Endothelial cell of umbilical vein (primary cell): ENCODE measurements at regions of chr6 and their contacts with region 1.

Region 1: DNA sequence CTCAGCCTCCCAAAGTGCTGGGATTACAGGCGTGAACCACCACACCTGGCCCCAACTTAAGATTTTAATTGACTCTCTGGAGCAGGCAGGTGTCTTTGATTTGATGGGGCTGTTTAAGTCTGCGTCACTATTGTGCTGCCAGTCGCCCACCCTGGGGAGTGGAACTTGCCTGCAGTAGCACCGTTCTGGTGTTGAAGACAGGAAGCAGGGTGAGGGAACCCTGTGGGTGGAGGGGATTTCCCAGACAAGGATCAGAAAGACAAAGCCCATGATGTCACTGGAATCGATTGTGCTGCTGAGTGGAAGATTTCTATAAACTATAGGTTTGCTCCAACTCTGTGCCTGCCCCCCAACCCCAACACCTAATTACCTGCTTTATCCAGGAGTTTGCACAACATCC is 11.0 kb downstream of the ALDH8A1 start:
- DNase-seq: no peak
- H3K4me3 ChIP-seq: no peak overlapping the region
- H3K27ac ChIP-seq: no peak overlapping the region
- H3K4me1 ChIP-seq: no peaks in the 10 kb centered on the region
- H3K27me3 ChIP-seq: no peaks in the 10 kb centered on the region
- CTCF ChIP-seq: no peak
- POLR2A ChIP-seq: no peak

Region 2: DNA sequence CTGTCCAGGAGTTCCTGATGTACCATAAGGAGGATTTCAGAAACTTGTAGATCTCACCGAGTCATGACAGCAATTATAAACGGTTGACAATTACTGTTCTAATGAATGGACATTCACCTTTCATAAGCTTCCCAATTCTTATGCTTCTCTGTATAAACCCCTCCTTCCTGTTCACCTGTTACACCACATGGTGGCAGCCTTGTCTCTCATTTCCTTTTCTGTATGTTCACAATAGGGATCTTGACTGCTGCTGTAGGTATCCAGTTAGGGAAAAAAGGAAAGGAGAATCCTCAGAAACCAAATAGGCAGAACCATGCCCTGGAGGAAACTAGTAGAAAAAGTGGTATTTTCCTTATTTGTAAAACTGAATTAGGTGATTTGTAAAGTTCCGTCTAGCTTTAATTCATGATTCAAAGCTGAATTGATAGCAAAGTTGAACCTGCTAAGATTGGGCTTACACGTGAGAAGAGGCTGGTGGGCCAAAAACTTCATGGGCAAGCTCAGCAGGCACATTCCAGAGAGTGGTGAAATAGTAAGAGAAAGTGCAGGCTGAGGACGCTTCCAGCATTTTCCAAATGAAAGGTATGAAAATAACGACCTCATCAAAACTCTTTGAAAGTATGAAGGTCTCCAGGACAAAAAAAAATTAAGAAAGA is 1014.8 kb before region 1 on chr6:
- CTCF ChIA-PET with region 1: interaction called, 21 read pairs
- POLR2A ChIA-PET with region 1: no interaction called
- dilution Hi-C with region 1: no loop called
- intact Hi-C with region 1: no loop called
- DNase-seq: peak; percentile 82
- H3K4me3 ChIP-seq: no peak overlapping the region
- H3K27ac ChIP-seq: no peak overlapping the region
- H3K4me1 ChIP-seq: no peaks in the 10 kb centered on the region
- H3K27me3 ChIP-seq: peaks cover 13 to 31% of the 10 kb centered on the region in 2 experiments
- CTCF ChIP-seq: peak; percentile 59 to 60
- POLR2A ChIP-seq: no peak

Region 3: GRCh38 chr6:134123666-134124208 is 815.2 kb before region 1 on chr6:
- CTCF ChIA-PET with region 1: interaction called, 258 read pairs
- POLR2A ChIA-PET with region 1: no interaction called
- dilution Hi-C with region 1: no loop called
- intact Hi-C with region 1: loop called (anchors 1 kb)
- DNase-seq: peak; percentile 76
- H3K4me3 ChIP-seq: no peak overlapping the region
- H3K27ac ChIP-seq: no peak overlapping the region
- H3K4me1 ChIP-seq: no peaks in the 10 kb centered on the region
- H3K27me3 ChIP-seq: no peaks in the 10 kb centered on the region
- CTCF ChIP-seq: peak; percentile 38 to 42
- POLR2A ChIP-seq: no peak

Region 4: GRCh38 chr6:134161036-134161435 is 777.9 kb before region 1 on chr6:
- CTCF ChIA-PET with region 1: interaction called, 111 read pairs
- POLR2A ChIA-PET with region 1: no interaction called
- dilution Hi-C with region 1: no loop called
- intact Hi-C with region 1: loop called (anchors 1 kb)
- DNase-seq: no peak
- H3K4me3 ChIP-seq: no peak overlapping the region
- H3K27ac ChIP-seq: no peak overlapping the region
- H3K4me1 ChIP-seq: no peaks in the 10 kb centered on the region
- H3K27me3 ChIP-seq: no peaks in the 10 kb centered on the region
- CTCF ChIP-seq: no peak
- POLR2A ChIP-seq: no peak

Region 5: DNA sequence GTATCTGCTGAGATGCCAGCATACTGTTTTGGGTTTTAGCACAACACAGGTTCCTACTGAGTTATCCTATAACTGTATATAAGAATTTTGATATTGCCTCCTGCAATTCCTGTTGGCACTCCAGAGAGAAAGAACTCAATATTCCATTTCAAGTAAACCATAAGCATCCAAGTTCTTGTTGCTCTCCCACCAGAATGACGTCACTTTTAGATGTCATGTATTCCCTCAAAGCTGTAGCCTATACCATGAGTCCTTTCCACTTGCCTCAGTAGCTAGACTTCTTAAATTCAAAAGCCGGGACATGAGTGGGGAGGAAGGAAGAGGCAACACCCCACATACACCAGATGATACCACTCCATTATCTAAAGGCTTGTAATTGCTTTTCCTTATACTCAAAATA is 160.5 kb before region 1 on chr6:
- CTCF ChIA-PET with region 1: no interaction called
- POLR2A ChIA-PET with region 1: no interaction called
- dilution Hi-C with region 1: no loop called
- intact Hi-C with region 1: no loop called
- DNase-seq: no peak
- H3K4me3 ChIP-seq: no peak overlapping the region
- H3K27ac ChIP-seq: no peak overlapping the region
- H3K4me1 ChIP-seq: no peaks in the 10 kb centered on the region
- H3K27me3 ChIP-seq: no peaks in the 10 kb centered on the region
- CTCF ChIP-seq: no peak
- POLR2A ChIP-seq: no peak

Region 6: DNA sequence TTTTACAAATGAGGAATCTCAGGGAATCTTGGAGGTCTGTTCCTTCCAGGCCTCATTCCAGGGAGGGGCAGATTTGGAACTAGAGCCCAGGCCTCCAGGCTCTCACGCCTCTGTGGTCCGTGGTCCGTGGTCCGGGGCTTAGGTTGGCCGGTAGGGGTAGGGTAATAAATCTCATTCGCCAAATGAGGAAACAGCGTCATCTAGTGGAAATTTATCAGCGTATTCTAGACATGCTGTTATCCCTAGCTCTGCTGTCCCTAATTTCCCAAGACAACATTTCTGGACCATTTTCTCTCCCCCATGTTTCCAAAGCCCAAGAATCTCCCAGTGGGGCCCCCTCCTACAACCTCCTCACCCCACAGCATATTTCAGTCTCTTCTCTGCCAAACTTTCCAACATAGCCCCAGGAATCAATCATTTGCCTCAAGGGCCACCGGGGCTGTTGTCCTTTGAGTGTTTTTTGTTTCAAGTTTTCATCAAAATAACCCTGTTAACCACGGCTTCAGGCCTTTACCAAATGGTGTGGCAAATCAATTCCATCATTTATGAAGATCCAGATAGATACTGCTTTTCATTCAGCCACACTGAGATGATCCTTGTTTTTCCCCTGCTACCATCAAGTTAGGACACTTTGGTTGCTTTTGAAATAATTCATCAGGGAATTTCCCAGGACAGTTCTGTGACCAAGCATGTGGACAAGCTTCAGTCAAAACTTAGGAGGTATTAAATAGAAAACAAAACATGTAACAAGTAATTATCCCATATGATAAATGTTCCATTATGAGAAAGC is 115.8 kb before region 1 on chr6:
- CTCF ChIA-PET with region 1: interaction called, 114 read pairs
- POLR2A ChIA-PET with region 1: no interaction called
- dilution Hi-C with region 1: no loop called
- intact Hi-C with region 1: loop called (anchors 1 kb)
- DNase-seq: peak; percentile 84
- H3K4me3 ChIP-seq: no peak overlapping the region
- H3K27ac ChIP-seq: no peak overlapping the region
- H3K4me1 ChIP-seq: no peaks in the 10 kb centered on the region
- H3K27me3 ChIP-seq: no peaks in the 10 kb centered on the region
- CTCF ChIP-seq: peak; percentile 85 to 88
- POLR2A ChIP-seq: no peak

Region 7: GRCh38 chr6:134882426-134883038 is 56.4 kb before region 1 on chr6:
- CTCF ChIA-PET with region 1: interaction called, 82 read pairs
- POLR2A ChIA-PET with region 1: no interaction called
- dilution Hi-C with region 1: no loop called
- intact Hi-C with region 1: loop called (anchors 1 kb)
- DNase-seq: peak; percentile 79
- H3K4me3 ChIP-seq: no peak overlapping the region
- H3K27ac ChIP-seq: peak overlapping the region; percentile 3
- H3K4me1 ChIP-seq: peaks cover 13% of the 10 kb centered on the region
- H3K27me3 ChIP-seq: no peaks in the 10 kb centered on the region
- CTCF ChIP-seq: peak; percentile 82
- POLR2A ChIP-seq: no peak

Region 8: DNA sequence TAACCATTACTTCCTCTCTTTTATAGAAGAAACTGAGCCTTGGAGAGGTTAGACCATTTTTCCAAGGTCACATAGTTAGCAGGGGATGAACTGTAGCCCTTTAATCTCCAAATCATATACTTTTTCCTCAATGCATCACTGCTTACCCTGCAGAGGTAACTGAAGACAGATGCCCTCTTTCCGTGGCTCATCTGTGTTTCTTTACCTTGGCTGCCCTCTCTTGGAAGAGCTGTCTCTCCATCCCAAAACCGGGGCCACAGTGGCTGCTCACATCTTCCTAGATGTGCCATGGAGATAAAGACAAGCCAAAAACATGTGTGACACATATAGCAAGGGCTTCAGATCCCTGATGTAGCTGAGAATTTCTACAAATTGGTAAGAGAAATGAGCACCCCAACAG is 11.6 kb after region 1 on chr6:
- CTCF ChIA-PET with region 1: interaction called, 20 read pairs
- POLR2A ChIA-PET with region 1: no interaction called
- dilution Hi-C with region 1: no loop called
- intact Hi-C with region 1: no loop called
- DNase-seq: no peak
- H3K4me3 ChIP-seq: no peak overlapping the region
- H3K27ac ChIP-seq: no peak overlapping the region
- H3K4me1 ChIP-seq: no peaks in the 10 kb centered on the region
- H3K27me3 ChIP-seq: no peaks in the 10 kb centered on the region
- CTCF ChIP-seq: no peak
- POLR2A ChIP-seq: no peak

Region 9: DNA sequence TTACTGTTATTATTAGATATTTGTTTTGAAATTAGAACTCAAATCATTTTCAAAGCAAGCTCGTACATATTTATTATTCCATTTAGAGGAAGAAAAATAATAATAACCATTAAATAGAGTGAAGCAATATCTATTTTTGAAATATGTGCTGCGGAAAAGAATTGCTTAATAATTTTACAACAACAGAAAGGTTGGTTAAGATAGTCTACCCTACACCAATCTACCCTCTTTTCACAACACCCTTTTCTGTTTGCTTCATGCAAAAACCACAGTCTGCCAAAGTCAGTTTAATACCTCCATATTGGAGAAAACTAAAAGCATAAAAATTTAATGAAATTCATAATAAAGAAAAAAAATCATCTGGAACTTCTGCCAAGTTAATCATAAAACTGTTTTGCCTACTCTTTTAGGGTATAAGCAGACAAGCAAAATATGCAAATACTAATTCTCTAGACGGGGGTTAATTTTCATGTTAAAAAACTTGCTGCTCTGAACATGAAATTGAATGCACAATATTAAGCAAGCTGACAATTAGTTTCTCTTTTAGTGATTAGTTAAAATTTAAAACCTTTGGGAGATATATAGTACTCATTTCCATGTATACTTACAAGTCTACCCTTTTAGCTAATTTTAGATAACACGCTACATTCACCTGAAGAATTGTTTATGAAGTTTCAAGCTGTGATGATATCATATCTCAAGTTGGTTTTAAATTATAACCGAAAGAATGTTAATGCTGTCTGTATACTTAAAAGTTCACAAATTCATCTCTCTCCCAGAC is 458.5 kb after region 1 on chr6:
- CTCF ChIA-PET with region 1: no interaction called
- POLR2A ChIA-PET with region 1: no interaction called
- dilution Hi-C with region 1: no loop called
- intact Hi-C with region 1: no loop called
- DNase-seq: no peak
- H3K4me3 ChIP-seq: no peak overlapping the region
- H3K27ac ChIP-seq: no peak overlapping the region
- H3K4me1 ChIP-seq: no peaks in the 10 kb centered on the region
- H3K27me3 ChIP-seq: no peaks in the 10 kb centered on the region
- CTCF ChIP-seq: no peak
- POLR2A ChIP-seq: no peak